Posterior cingulate gyrus (tissue), 11 donors: ENCODE measurements at regions of chr16 and their contacts with region 1.

Region 1: GRCh38 chr16:1019231-1020090 is 37.9 kb downstream of the SOX8 start:
- DNase-seq: peak; percentile 56 to 97 (median 75)

Region 2: DNA sequence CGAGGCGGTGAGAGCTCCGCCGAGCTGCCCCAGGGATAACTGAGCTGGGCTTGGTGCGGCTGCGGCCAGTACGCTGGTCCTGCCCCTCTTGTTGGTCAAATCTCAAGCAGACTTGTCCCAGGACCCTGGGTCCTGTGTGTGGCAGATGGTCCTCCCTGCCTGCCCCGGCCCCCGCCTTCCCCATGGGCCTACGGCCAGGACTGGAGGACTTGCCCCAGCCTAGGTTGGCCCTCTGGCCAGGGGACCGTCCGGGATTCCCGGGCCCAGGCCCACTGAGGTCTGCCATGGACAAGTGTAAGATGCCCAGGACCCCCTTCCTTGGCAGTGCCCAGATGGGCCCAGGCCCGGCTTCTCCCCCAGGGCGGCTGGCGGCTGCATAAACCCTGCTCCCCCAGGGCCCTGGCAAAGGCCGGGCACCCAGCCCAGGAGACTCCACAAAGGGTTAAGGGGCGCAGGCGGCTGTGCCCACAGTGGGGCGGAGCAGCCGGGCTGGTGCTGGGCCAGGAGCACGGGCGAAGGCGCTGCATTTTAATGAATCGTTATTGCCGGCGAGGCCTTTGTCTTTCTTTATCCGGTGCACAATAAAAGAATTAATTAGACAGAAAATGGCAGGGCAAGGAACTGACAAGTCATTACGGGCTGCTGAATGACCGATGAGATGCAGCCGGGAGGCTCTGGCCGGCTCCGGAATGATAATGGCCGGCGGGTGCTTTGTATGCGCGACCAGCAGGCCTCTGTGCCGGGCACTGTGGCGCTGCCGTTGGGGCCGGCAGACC is 28.8 kb before region 1 on chr16:
- intact Hi-C with region 1: loop called (anchors 1 kb)
- DNase-seq: peak; percentile 54 to 95 (median 74)